ENCODE measurements at regions of chr2 and their contacts with region 1.

Region 1: DNA sequence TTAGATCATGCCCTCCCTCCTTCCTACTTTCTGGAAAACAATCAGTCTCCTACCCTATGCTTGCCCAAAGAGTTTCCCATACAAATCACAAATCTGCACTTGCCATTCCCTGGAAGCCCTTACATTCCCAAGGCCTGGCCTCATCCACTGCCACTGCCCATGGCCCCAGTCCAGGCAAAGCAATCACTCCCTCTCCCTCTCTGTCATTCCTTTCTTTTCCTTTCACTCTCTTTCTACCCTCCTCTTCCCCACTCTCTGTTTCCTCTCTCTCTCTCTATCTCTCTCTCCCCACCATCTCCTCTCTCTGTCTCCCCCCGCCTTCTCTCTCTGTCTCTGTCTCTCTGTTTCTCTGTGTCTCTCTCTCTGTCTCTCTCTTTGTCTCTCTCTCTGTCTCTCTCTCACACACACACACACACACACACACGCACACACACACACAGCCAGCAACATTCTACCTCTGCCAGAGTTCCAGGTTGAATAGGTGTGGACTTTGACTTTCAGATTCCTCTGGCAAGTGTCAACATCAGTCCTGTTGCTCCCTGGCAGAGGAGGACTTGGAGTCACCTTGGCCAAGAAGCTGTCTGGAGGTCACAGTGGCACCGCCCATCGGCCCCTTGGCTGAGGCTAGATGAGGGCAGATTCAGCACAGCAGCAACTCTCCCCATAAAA is 43.7 kb upstream of the NAT8 start:
- DNase-seq: no peak
- H3K4me3 Mint-ChIP-seq: no peak overlapping the region
- H3K27ac Mint-ChIP-seq: no peak overlapping the region
- H3K4me1 Mint-ChIP-seq: no peaks in the 10 kb centered on the region
- H3K27me3 Mint-ChIP-seq: no peaks in the 10 kb centered on the region

Region 2: GRCh38 chr2:73697606-73698005 is 11.7 kb after region 1 on chr2:
- CTCF ChIA-PET with region 1: interaction called, 11 read pairs
- intact Hi-C with region 1: no loop called
- DNase-seq: no peak
- H3K4me3 Mint-ChIP-seq: no peak overlapping the region
- H3K27ac Mint-ChIP-seq: no peak overlapping the region
- H3K4me1 Mint-ChIP-seq: no peaks in the 10 kb centered on the region
- H3K27me3 Mint-ChIP-seq: peaks cover 7% of the 10 kb centered on the region